BJ (cell line): ENCODE measurements at regions of chr6 and their contacts with region 1.

Region 1: DNA sequence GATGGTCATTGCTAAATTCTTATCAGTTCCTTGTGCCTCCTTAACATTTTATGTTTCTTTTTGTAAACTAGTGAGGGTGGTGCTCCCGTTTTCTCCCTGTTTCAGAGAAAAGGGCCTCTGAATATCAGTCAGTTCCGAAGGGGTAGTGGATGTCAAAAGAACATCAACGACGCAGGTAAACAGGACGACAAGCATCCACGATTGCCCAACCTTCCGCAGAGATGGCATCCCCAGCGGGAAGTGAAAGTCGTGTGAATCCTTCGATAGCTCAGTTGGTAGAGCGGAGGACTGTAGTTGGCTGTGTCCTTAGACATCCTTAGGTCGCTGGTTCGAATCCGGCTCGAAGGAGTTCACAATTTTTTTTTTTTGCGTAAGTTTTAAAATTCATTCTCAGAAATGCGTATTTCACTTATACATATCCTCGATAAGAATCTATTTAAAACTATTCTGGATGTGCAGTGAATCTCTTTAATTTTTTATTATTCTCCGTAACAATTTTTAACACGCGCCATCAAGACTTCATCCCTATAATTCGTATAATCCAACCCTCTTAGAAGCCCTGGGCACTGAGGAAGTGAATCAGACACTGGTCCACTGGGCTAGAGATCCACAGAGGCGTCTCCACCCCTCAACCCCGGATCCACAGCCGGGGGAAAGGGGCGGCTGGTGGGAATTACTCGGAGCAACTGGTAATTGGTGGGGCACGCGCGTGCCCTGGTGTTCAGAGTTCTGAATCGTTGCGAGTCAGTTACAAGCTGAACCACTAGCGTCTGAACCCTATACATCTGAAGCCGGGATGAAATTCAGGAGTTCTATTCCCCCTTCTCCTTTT is 27.9 kb upstream of the ABT1 start:
- DNase-seq: peak; percentile 70
- H3K4me3 ChIP-seq: peak overlapping the region; percentile 42
- H3K27me3 ChIP-seq: no peaks in the 10 kb centered on the region
- CTCF ChIP-seq: peak; percentile 29

Region 2: DNA sequence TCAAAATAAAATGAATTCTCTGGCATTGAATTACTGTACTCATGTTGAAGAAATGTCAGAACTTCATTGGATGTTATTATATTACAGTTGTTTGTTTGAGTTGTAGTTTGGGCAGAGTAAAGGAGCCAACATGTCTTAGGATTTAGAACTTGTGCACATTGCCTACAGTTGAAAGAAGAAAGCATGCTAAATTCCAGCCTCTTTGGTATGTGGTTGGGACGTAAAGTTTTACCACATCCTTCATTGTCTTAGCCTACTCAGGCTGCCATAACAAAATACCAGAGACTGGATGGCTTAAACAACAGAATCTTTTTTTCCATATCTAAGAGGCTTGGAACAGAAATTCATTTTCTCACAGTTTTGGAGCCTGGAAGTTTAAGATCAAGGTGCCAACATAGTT is 439.2 kb before region 1 on chr6:
- CTCF ChIA-PET with region 1: no interaction called
- POLR2A ChIA-PET with region 1: no interaction called
- DNase-seq: no peak
- H3K4me3 ChIP-seq: no peak overlapping the region
- H3K27me3 ChIP-seq: no peaks in the 10 kb centered on the region
- CTCF ChIP-seq: no peak

Region 3: DNA sequence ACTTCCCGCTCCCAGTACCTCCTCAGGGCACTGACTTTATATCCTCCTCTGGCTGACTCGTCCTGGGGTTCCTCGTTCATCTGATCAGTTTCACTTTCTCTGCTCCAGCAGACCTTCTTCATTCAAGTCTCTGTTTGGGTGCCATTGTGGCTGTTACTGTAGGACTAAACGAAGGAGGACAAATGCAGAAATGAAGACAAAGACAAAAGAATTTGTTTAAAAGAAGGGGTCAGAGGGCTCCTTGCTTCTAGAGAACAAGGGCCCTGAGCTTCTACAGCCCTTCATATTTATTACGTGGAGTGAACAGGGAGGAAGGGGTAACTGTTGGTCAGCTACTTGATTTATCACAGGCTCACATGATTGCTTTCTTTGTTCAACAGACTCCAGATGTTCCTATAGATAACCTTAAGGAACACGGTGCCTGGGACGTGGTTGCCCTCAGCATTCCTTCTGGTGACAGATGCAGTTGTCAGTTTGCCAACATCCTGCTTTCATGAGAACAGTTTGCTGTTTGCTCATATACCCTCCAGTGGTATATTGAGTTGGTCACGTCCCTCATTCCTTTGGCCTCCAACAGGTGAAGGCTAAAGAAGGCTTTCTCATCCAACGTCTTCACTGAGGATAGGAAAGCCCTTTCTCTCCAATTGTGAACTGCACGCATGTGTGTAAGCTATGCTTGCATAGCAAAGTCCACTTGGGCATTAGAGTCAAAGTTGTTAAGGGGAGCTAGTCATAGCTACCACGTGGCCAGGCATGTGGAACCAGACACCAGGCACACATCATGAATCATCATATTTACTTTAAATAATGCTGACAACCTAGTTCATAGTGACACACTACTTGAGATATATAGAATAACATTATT is 272.9 kb before region 1 on chr6:
- CTCF ChIA-PET with region 1: no interaction called
- POLR2A ChIA-PET with region 1: no interaction called
- DNase-seq: no peak
- H3K4me3 ChIP-seq: no peak overlapping the region
- H3K27me3 ChIP-seq: no peaks in the 10 kb centered on the region
- CTCF ChIP-seq: no peak

Region 4: DNA sequence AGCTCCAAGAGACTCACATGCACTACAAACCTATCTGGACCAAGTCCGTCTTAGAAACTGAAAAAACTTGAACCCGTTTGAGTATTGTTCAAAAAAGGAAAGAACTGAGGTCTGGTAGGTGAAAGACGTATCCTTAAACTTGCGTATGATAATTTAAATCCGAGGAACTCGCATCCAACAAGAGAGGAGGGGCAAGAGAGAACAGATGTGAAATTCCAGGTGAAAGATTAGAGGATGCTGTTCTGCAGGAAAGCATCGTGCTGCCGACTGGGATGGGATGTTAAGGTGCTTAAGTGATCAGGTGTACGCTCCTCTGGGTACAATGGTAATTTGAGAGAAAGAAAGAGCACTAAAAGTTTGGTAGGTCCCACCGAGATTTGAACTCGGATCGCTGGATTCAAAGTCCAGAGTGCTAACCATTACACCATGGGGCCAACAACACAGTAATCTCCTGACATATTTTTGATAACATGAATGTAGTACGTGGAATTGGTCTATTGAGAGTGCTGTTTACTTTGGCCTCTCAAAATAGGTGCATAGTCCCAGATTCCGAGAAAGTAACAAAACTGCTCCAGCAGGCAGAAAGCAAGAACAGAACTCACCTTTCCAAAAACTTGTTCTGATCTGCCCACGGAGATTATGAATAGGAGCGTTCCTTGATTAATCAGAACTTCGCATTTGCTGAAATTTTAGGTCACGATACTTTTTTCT is 257.3 kb before region 1 on chr6:
- CTCF ChIA-PET with region 1: no interaction called
- POLR2A ChIA-PET with region 1: interaction called, 19 read pairs
- DNase-seq: no peak
- H3K4me3 ChIP-seq: peak overlapping the region; percentile 30
- H3K27me3 ChIP-seq: no peaks in the 10 kb centered on the region
- CTCF ChIP-seq: 0 out of 2 replicates have a peak, but pooled peaks have one; percentile 8

Region 5: DNA sequence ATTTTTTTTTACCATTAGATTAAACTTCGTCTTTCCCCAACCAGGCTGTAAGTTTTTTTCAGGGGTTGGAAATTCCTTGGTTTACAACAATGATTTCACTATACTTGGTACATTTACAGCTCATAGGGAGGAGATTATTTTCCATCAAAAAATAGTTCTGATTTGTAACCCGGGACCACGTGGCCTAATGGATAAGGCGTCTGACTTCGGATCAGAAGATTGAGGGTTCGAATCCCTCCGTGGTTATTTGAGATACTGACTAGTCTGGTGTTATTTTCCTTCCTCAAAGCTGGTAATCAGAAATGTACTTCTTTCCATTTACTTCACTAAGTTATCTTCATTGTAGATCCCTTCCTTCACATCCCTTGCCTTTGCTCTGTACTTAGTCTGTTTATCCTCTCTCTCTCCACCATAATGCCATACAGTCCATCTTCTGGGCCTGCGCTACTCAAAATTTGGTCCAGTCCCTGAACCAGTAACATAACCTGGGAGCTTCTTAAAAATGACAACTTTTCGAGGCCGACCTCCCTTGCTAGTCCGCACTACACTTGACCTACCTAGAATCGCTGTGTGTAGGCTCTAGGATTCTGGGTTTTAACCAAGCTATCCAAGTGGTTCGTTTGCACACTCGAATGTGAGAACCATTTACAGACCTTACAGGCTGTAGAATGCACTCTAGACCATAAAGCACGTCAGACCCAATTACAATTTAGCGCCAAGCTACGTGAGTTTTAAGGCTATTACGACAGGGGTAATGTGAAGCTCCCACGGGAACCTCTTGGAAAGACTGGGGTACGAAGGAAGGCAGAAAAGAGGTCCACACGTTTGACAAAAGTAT is 246.0 kb before region 1 on chr6:
- CTCF ChIA-PET with region 1: interaction called, 12 read pairs
- POLR2A ChIA-PET with region 1: interaction called, 3 read pairs
- DNase-seq: peak; percentile 77
- H3K4me3 ChIP-seq: peak overlapping the region; percentile 64
- H3K27me3 ChIP-seq: no peaks in the 10 kb centered on the region
- CTCF ChIP-seq: no peak

Region 6: DNA sequence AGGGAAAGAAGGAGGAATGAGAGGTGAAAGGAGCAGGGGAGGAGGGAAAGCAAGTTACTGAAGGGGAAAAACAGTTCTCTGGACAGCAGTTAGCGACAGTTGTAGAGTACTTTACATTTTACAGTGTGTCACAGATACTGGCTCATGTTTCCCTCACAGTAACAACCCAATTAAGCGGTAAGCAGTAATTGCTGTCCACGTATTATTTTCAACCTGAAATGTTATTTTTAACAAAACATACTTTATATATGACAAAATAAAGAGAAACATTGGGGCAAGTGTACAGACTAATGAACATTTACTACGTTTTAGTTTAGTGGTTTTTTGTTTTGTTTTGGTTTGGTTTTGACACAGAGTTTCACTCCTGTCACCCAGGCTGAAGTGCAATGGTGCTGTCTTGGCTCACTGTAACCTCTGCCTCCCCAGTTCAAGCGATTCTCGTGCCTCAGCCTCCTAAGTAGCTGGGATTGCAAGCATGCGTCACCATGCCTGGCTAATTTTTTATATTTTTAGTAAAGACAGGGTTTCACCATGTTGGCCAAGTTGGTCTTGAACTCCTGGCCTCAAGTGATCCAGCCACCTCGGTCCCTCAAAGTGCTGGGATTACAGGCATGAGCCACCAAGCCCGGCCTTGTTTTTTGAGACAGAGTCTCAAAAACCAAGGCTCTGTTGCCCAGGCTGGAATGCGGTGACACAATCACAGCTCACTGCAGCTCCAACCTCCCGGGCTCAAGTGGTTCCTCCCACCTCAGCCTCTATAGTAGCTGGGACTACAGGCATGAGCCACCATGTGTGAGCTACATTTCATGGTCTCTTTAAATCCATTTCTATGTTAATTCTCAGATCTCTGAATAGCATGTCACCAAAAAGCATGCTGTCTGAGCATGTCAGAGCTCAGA is 226.5 kb before region 1 on chr6:
- CTCF ChIA-PET with region 1: interaction called, 38 read pairs
- POLR2A ChIA-PET with region 1: no interaction called
- DNase-seq: no peak
- H3K4me3 ChIP-seq: peak overlapping the region; percentile 14; the same call in 1 of the 2 replicates
- H3K27me3 ChIP-seq: no peaks in the 10 kb centered on the region
- CTCF ChIP-seq: no peak

Region 7: DNA sequence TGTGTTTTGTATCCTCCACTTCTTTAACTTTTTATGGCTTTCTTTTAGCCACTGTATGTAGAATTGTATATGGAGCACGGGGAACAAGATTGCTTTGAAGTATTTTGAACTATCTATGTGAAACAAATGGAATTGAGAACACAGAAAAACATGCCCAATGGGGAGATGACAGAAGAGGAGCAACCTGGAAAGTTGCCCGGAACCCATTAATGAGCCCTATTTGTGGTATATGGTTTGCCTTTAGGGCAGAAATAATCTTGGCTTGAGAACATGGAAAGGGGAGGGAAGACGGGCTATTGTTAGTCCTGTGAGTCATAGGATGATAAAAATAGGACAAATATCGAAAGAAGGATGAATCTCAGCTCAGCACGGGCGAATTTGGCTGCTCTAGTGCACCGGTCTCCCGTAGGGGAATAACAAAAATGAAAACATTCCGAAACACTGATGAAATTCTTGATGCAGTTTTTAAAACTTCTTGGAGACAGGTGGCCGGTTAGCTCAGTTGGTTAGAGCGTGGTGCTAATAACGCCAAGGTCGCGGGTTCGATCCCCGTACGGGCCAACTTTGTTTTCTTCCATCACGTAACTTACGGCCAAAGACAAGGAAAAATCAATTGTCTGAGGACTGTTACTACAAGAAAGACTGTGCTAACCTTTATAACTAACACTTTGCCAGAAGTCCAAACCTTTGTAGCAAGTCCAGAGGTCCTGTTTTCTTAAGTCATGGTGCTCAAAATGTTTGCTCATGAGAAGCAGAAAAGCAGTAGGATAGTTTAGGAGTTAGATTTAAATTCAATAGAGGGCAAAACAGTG is 15.0 kb before region 1 on chr6:
- CTCF ChIA-PET with region 1: interaction called, 11 read pairs
- POLR2A ChIA-PET with region 1: no interaction called
- DNase-seq: peak; percentile 91
- H3K4me3 ChIP-seq: peak overlapping the region; percentile 38
- H3K27me3 ChIP-seq: no peaks in the 10 kb centered on the region
- CTCF ChIP-seq: no peak

Region 8: DNA sequence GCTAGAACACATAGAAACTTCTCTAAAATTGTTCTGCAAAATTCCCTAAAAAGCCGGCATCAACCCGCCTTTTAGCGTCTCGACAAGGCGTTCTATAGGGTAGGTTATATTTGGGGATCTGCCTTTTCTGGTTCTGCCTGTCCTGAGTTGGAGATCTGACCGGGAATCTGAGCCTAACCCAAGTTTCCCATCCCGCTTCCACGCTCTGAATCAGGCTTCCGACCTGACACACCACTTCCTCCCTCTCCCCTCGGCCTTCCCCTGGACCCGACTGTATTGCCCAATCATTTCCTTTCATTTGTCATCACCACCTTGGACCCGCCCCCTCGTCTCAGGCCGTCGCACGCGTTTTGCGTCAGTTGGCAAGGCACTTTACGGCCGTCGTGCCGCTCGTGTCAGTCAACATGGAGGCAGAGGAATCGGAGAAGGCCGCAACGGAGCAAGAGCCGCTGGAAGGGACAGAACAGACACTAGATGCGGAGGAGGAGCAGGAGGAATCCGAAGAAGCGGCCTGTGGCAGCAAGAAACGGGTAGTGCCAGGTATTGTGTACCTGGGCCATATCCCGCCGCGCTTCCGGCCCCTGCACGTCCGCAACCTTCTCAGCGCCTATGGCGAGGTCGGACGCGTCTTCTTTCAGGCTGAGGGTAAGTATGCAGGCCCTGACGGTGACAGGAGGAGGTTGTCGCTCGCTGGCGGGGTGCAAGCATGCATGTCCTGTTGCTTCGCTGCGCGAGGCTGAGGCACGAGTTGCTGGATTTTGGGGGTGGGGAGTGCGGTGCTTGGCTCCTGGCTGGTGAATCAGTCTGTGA is 28.0 kb after region 1 on chr6 and contains the start of gene ABT1:
- CTCF ChIA-PET with region 1: interaction called, 43 read pairs
- POLR2A ChIA-PET with region 1: no interaction called
- DNase-seq: peak; percentile 87
- H3K4me3 ChIP-seq: peak within 1 kb of the TSS; percentile 90
- H3K27me3 ChIP-seq: no peaks in the 10 kb centered on the region
- CTCF ChIP-seq: no peak
- polyA plus RNA-seq, gene ABT1: 16.1 and 18.4 TPM in 2 replicates